Ascending aorta (tissue), 2 donors: ENCODE measurements at regions of chr17 and their contacts with region 1.

Region 1: DNA sequence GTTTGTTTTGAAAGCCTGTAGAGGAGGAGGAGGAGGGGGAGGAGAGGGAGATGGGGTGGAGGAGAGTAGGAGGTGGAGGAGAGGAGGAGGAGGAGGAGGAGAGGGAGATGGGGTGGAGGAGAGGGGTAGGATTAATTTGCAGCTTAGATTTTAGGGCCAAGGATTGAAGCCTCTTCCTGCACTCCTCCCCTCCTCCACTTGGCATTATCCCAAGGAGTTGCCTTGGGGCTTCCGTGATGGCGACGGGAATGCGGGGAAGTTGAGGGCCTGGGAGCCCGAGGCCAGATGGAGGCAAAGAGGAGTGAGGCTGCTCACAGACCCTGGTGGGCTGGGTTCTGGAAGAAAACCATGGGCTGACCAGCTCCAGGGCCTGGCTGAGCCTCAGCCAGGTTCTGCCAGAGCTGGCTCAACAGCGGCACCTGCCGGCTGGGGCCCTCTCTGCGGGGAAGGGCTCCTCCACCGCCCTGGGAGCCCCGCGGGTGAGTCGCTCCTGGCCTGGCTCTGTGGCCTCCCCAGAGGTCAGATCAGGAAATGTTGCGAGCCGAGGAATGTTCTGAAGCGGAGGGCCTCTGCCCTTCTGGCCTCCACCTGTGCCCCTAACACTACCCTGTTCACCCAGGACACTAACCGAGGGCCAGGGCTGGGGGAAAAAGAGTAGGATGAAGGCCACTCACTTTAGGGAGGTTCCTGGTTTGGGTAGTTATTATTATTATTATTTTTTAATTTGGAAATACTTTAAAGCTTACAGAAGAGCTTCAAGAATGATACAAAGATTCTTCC is 23.9 kb upstream of the FMNL1 start:
- DNase-seq: peak; percentile 55 to 96
- H3K4me3 ChIP-seq: peak overlapping the region in 1 of 2 donors; percentile 38
- H3K27ac ChIP-seq: peak overlapping the region in 1 of 2 donors; percentile 26
- H3K4me1 ChIP-seq: peaks cover 0 to 4% of the 10 kb centered on the region in 2 donors
- H3K27me3 ChIP-seq: no peaks in the 10 kb centered on the region
- CTCF ChIP-seq: peak; percentile 99 to 100 (median 99)

Region 2: DNA sequence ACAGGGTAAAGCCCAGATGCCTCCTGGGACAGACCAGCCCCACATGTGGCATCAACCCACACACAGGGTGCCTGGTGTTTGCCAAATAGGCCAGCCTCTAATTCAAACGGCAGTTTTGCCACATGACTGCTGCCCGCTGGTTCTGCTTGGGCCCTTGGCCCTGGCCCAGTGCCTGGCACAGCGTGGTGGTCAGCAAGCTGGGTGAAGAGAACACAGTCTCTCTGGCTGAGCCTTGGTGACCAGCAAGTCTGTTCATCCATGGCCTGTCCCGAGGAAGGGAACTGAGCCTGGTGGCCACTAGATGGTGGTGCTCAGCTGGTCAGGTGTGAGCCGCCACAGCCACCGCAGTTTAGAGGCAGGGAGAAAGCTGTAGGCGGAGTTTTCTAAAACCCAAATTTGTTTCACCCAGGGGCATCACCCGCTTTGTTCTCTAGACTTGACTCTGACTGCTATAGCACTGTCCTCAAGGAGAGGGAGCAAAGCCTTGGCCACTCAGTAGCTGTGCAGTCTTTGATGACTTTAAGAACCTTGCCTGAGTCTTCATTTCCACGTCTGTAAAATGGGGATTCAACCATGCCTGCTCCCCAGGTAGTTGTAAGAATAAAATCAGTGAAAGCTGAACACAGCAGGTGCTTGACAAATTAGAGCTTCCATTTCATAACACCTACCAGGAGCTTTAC is 277.7 kb before region 1 on chr17:
- intact Hi-C with region 1: loop called (anchors 5 kb)
- DNase-seq: peak; percentile 54 to 90
- H3K4me3 ChIP-seq: no peak overlapping the region
- H3K27ac ChIP-seq: peak overlapping the region in 1 of 2 donors; percentile 30
- H3K4me1 ChIP-seq: peaks cover 12 to 24% of the 10 kb centered on the region in 2 donors
- H3K27me3 ChIP-seq: no peaks in the 10 kb centered on the region
- CTCF ChIP-seq: peak; percentile 82 to 90 (median 89)

Region 3: GRCh38 chr17:45172454-45173286 is 25.1 kb before region 1 on chr17:
- intact Hi-C with region 1: loop called (anchors 1 kb)
- DNase-seq: peak; percentile 29 to 93
- H3K4me3 ChIP-seq: peak overlapping the region; percentile 59 to 68
- H3K27ac ChIP-seq: peak overlapping the region; percentile 95
- H3K4me1 ChIP-seq: peaks cover 3 to 28% of the 10 kb centered on the region in 2 donors
- H3K27me3 ChIP-seq: no peaks in the 10 kb centered on the region
- CTCF ChIP-seq: peak in 1 of 3 experiments; percentile 2